Aorta (tissue), 5 donors: ENCODE measurements at regions of chr2 and their contacts with region 1.

Region 1: DNA sequence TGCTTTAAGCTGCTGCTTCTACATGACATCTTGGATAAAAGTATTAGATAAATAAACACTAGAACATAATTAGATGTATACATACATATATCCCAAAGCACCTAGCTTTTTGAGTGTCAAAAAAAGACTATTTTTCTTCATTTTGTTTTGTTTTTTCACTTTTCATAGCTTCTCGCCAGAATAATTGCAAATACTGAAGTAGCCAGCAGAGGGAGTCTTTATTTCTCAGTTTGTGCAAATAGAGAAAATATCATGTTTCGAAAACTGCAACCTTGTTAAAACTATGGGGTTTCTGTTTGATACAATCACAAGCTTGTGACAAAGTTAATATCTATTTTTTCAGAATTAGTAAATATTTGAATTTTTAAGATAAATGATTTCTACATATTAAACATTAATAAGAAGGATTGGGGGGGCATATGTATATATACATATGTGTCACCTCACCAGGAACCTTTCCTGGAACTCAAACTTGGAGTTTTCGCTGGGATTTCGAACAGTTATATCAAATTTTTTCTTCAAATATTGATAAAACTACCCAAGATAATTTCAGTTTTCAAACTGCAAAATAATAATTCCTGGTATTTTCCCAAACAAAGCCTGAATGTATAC is 61.0 kb downstream of the GRB14 start:
- DNase-seq: no peak
- ATAC-seq: peak; percentile 56
- H3K4me3 ChIP-seq: peak overlapping the region; percentile 34 to 36
- H3K27ac ChIP-seq: no peak overlapping the region
- H3K4me1 ChIP-seq: no peaks in the 10 kb centered on the region
- H3K27me3 ChIP-seq: no peaks in the 10 kb centered on the region

Region 2: GRCh38 chr2:164717000-164717803 is 156.9 kb after region 1 on chr2:
- intact Hi-C with region 1: loop called (anchors 2 kb)
- DNase-seq: no peak
- ATAC-seq: no peak
- H3K4me3 ChIP-seq: no peak overlapping the region
- H3K27ac ChIP-seq: no peak overlapping the region
- H3K4me1 ChIP-seq: no peaks in the 10 kb centered on the region
- H3K27me3 ChIP-seq: no peaks in the 10 kb centered on the region

Region 3: DNA sequence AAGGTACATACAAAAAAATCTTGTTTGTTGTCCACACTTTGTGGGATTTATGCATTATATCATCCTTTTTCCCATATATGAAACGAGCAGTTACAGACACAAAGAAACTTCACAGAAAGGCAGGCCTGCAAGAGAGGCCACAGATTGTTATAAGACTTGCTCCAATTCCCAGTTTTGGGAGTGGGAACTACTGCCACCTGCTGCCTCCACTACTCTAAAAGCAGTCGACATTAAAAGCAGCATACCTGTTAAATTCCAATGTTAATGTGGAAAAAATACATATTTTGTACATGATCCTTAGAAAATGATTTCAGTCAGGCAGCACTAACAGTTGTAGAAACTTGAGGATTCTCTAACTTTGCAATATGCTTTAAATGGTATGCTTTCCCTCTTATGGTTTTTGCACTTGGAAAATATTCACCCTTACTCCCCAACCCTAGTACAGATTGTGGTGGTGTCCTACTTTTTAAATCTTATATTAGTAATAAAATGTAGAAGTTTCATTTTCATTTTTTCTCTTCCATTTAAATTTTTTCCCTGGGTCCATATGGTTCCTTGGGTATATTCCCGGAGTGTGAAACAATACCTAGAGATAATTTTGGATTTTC is 357.1 kb after region 1 on chr2:
- intact Hi-C with region 1: loop called in 1 of 2 experiments (anchors 10 kb)
- DNase-seq: peak; percentile 42 to 47
- ATAC-seq: no peak
- H3K4me3 ChIP-seq: no peak overlapping the region
- H3K27ac ChIP-seq: no peak overlapping the region
- H3K4me1 ChIP-seq: no peaks in the 10 kb centered on the region
- H3K27me3 ChIP-seq: no peaks in the 10 kb centered on the region